Naive thymus-derived CD4-positive, alpha-beta T cell (primary cell): ENCODE measurements at regions of chr11 and their contacts with region 1.

Region 1: DNA sequence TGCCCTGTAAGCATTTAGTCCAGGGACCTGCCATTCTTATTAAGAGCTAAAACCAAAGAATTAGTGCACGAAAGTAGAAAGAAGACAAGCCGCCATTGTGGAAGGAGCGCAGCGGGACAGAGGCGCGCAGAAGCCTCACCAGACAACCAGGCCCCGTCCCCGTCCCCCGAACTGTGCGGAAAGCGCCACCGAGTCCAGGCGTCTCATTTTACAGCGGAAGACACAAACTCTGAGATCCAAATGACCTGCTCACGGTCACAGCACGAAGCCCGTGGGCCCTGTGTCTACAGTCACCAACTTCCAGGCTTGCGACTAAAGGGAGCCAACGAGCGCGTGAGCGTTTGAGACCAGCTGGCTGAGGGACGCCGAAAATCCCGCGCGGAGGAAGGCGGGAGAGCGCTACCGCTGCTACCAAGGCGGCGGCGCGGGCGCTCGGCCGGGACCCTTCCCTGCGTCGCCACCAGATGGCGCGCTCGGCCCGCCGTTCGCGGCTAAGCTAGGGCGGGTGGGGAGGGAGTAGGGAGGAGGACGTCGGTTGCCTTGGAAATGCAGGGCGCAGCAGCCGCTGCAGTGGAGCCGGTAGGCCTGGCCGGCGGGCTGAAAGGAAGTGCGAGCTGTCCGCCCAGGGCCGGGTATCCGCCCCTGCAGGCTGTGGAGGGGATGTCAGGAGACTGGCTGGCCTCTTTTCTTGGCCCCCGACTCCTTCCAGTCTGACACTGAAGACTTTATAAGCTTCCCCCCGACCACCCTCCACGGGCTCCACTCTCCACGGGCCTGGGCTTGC is 434 bp upstream of the CCDC83 start:
- DNase-seq: peak; percentile 81 to 97 (median 90)
- ATAC-seq: peak; percentile 99
- H3K4me3 ChIP-seq: peak overlapping the region; percentile 71
- H3K4me3 Mint-ChIP-seq: peak overlapping the region; percentile 79 to 95 (median 94)
- H3K27ac ChIP-seq: peak overlapping the region; percentile 84
- H3K27ac Mint-ChIP-seq: peak overlapping the region; percentile 85 to 98 (median 95)
- H3K4me1 ChIP-seq: peaks cover 6 to 9% of the 10 kb centered on the region in 2 donors
- H3K4me1 Mint-ChIP-seq: peaks cover 0 to 15% (median 13%) of the 10 kb centered on the region in 7 donors
- H3K27me3 ChIP-seq: no peaks in the 10 kb centered on the region
- H3K27me3 Mint-ChIP-seq: peaks cover 0 to 7% (median 0%) of the 10 kb centered on the region in 5 donors

Region 2: DNA sequence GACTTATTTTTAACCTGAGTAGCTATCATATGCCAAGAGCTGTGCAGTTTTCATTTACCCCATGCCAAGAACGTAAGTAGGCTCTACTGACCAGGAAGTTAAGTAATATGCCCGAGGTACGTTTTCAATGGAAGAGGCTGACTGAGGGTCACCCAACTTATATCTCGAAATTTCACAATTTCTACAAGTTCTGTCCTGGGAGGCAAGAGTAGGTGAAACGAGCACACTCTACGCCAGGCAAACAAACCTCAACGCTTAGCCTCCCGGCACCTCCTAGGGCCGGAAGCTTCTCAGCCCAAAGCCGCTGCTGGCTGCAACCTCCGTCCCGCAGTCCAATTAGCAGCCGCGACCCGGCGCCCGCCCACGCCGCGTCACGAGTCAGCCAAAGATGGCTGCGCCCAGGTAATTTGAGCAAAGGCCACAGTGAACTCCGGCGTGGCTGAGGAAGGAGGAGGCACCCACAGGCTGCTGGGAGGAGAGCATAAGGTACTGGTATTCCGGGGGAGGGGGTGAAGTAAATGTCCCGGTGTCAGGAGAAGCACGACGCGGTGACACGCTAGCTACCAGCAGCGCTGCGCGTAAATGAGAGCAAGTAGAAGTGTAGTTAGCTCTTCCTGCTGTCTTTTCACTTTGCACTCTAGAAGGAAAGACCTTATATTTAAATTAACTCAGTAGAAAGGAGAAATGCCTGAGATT is 207.0 kb before region 1 on chr11 and contains the start of gene TMEM126A:
- CTCF ChIA-PET with region 1: no interaction called
- POLR2A ChIA-PET with region 1: interaction called, 3 read pairs
- intact Hi-C with region 1: loop called in 1 of 2 experiments (anchors 5 kb)
- DNase-seq: peak; percentile 85 to 92 (median 90)
- ATAC-seq: peak; percentile 99
- H3K4me3 ChIP-seq: peak within 1 kb of the TSS; percentile 83
- H3K4me3 Mint-ChIP-seq: peak within 1 kb of the TSS; percentile 92 to 100 (median 98)
- H3K27ac ChIP-seq: peak within 1 kb of the TSS; percentile 87
- H3K27ac Mint-ChIP-seq: peak within 1 kb of the TSS; percentile 86 to 99 (median 98)
- H3K4me1 ChIP-seq: peaks cover 11 to 14% of the 10 kb centered on the region in 2 donors
- H3K4me1 Mint-ChIP-seq: peaks cover 9 to 48% (median 38%) of the 10 kb centered on the region in 7 donors
- H3K27me3 ChIP-seq: no peaks in the 10 kb centered on the region
- H3K27me3 Mint-ChIP-seq: peaks cover 12 to 29% (median 22%) of the 10 kb centered on the region in 5 donors
- total RNA-seq, gene TMEM126A: 17.8 to 40.8 (median 18.9) TPM

Region 3: DNA sequence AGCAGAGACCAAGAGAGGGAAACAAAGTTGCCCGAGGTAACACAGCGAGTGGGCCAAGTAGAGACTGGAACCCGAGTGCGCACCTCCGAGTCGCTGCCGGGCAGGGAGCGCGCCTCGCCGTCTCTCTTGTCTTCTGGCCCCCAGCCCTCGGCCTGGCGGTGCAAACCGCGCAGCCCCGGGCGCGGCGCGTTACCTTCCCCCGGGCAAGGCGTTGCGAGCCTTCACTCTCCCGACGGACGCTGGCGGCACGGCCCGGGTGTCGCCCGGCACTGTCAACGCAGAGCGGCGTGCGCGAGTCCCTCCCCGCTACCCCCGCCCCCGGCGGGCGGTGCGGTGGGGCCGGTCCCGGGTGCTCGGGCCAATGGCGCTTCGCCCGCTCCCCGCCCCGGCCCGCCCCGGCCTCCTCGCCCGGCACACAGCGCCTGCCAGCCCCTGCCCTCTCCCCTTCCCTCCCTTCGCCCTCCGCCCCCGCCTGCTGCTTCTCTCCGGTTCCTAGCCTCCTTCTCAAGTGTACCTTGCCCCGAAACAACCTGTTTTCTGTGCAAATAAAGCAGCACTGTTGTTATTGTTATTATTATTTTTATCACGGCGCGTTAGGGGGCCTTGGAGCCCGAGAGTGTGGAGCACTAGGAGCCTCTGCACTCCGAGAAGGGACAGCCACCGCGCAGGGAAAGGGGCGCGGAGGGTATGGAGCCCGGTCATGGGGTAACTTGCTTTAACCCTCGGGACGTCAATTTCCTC is 43.7 kb before region 1 on chr11 and contains the start of gene SYTL2:
- CTCF ChIA-PET with region 1: interaction called, 10 read pairs
- POLR2A ChIA-PET with region 1: interaction called, 3 read pairs
- intact Hi-C with region 1: loop called (anchors 1 kb)
- DNase-seq: peak; percentile 69 to 87 (median 75)
- ATAC-seq: peak; percentile 95
- H3K4me3 ChIP-seq: peak within 1 kb of the TSS; percentile 86
- H3K4me3 Mint-ChIP-seq: peak within 1 kb of the TSS; percentile 87 to 97 (median 95)
- H3K27ac ChIP-seq: peak within 1 kb of the TSS; percentile 64
- H3K27ac Mint-ChIP-seq: peak within 1 kb of the TSS; percentile 79 to 98 (median 93)
- H3K4me1 ChIP-seq: peaks cover 14 to 32% of the 10 kb centered on the region in 2 donors
- H3K4me1 Mint-ChIP-seq: peaks cover 32 to 61% (median 52%) of the 10 kb centered on the region in 7 donors
- H3K27me3 ChIP-seq: no peaks in the 10 kb centered on the region
- H3K27me3 Mint-ChIP-seq: peaks cover 0 to 10% (median 0%) of the 10 kb centered on the region in 5 donors
- total RNA-seq, gene SYTL2: 24.8 to 62.9 (median 27.5) TPM

Region 4: GRCh38 chr11:86041975-86042378 is 187.2 kb after region 1 on chr11:
- CTCF ChIA-PET with region 1: interaction called, 3 read pairs
- POLR2A ChIA-PET with region 1: no interaction called
- intact Hi-C with region 1: loop called in 1 of 2 experiments (anchors 2 kb)
- DNase-seq: peak in 7 of 9 donors; percentile 63 to 79 (median 71)
- ATAC-seq: peak; percentile 98
- H3K4me3 ChIP-seq: no peak overlapping the region
- H3K4me3 Mint-ChIP-seq: peak overlapping the region in 4 of 10 donors; percentile 1 to 8 (median 5)
- H3K27ac ChIP-seq: peak overlapping the region; percentile 20
- H3K27ac Mint-ChIP-seq: peak overlapping the region in 7 of 9 donors; percentile 11 to 68 (median 38)
- H3K4me1 ChIP-seq: peaks cover 19 to 54% of the 10 kb centered on the region in 2 donors
- H3K4me1 Mint-ChIP-seq: peaks cover 49 to 73% (median 67%) of the 10 kb centered on the region in 7 donors
- H3K27me3 ChIP-seq: no peaks in the 10 kb centered on the region
- H3K27me3 Mint-ChIP-seq: no peaks in the 10 kb centered on the region

Region 5: DNA sequence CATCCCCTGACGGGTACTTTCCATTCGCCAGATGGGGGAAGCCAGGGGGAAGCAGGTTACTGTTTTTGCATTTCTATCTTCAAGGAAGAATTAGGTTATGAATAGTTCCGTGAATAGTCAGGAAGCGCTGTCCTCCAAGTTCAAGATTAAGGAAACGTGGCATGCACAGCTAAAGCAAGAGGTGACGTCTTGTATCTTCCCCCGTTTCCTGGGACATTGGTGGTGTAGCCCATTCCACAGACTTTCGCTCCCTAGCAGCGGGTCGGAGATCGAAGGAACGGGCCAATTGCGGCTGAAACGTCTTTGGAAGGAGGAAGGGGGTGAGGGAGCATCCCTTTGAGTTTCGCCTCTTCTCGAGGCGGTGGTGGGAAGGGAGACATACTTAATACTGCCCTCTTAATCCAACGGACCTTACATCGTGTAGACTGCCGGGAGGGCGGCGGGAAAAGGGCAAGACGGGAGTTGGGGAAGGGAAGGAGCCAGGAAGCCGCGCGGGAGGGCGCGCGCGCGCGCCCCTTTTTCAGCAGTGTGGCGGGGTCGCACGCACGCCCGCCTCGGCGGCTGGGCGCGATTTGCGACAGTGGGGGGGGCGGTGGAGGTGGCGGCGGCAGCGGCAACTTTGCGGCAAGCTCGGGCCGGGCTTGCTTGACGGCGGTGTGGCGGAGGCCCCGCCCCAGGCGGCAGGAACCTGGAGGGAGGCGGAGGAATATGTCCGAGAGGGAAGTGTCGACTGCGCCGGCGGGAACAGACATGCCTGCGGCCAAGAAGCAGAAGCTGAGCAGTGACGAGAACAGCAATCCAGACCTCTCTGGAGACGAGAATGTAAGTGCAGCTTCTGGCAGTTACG is 390.0 kb after region 1 on chr11 and contains the start of gene EED:
- CTCF ChIA-PET with region 1: no interaction called
- POLR2A ChIA-PET with region 1: no interaction called
- intact Hi-C with region 1: loop called in 1 of 2 experiments (anchors 1 kb)
- DNase-seq: peak; percentile 88 to 94 (median 92)
- ATAC-seq: peak; percentile 94
- H3K4me3 ChIP-seq: peak within 1 kb of the TSS; percentile 100
- H3K4me3 Mint-ChIP-seq: no peak within 1 kb of the TSS
- H3K27ac ChIP-seq: peak within 1 kb of the TSS; percentile 97
- H3K27ac Mint-ChIP-seq: no peak within 1 kb of the TSS
- H3K4me1 ChIP-seq: peaks cover 32 to 33% of the 10 kb centered on the region in 2 donors
- H3K4me1 Mint-ChIP-seq: peaks cover 0 to 34% (median 1%) of the 10 kb centered on the region in 7 donors
- H3K27me3 ChIP-seq: no peaks in the 10 kb centered on the region
- H3K27me3 Mint-ChIP-seq: peaks cover 0 to 5% (median 0%) of the 10 kb centered on the region in 5 donors
- total RNA-seq, gene EED: 22.2 to 62.4 (median 35.5) TPM

Region 6: GRCh38 chr11:86608251-86608799 is 753.6 kb after region 1 on chr11:
- CTCF ChIA-PET with region 1: no interaction called
- POLR2A ChIA-PET with region 1: no interaction called
- intact Hi-C with region 1: loop called (anchors 1 to 5 kb)
- DNase-seq: peak in 2 of 9 donors; percentile 7 to 36
- ATAC-seq: peak; percentile 78
- H3K4me3 ChIP-seq: no peak overlapping the region
- H3K4me3 Mint-ChIP-seq: peak overlapping the region in 1 of 10 donors; percentile 16
- H3K27ac ChIP-seq: no peak overlapping the region
- H3K27ac Mint-ChIP-seq: no peak overlapping the region
- H3K4me1 ChIP-seq: no peaks in the 10 kb centered on the region
- H3K4me1 Mint-ChIP-seq: peaks cover 0 to 14% (median 7%) of the 10 kb centered on the region in 7 donors
- H3K27me3 ChIP-seq: no peaks in the 10 kb centered on the region
- H3K27me3 Mint-ChIP-seq: peaks cover 0 to 4% (median 0%) of the 10 kb centered on the region in 5 donors